CD4-positive, alpha-beta memory T cell (primary cell): ENCODE measurements at regions of chr3 and their contacts with region 1.

Region 1: GRCh38 chr3:141105828-141106628 is 54.9 kb downstream of the SPSB4 start:
- DNase-seq: peak; percentile 39 to 61 (median 47)
- H3K4me3 ChIP-seq: no peak overlapping the region
- H3K4me3 Mint-ChIP-seq: no peak overlapping the region
- H3K27ac ChIP-seq: no peak overlapping the region
- H3K27ac Mint-ChIP-seq: no peak overlapping the region
- H3K4me1 ChIP-seq: no peaks in the 10 kb centered on the region
- H3K4me1 Mint-ChIP-seq: no peaks in the 10 kb centered on the region
- H3K27me3 ChIP-seq: no peaks in the 10 kb centered on the region
- H3K27me3 Mint-ChIP-seq: peaks cover 2% of the 10 kb centered on the region in 2 donors

Region 2: DNA sequence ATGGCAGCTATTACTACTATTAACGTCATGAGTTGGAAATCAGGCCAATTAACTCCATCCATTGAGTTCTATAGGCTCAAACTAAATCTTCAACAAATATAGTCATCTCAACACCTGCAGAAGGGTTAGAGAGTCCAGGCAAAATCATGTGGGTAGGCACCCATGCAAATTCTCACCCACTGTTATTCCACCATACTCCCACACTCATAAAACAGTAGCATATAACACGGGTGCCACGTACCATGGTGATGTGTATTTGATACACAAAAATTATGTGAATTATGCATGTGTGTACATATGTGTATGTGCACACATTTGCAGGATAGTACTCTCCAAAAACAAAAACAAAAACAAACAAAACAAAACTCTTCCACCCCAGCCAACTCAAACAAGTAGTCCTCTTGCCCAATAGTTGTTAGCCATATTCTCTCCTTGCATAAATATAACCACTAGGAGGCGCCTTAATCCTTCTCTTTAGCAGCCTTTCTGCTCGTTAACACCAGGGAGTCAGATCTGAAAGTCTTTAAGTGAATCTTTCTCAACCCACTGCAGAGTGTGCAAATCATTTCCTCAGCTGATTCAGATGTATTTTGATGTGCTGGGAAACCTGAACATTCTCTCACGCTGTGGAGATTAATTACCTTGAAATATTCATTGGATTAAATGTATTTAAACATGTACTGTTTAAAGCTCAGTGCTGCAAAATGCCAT is 1678.6 kb before region 1 on chr3:
- CTCF ChIA-PET with region 1: no interaction called
- POLR2A ChIA-PET with region 1: no interaction called
- intact Hi-C with region 1: loop called (anchors 5 kb)
- DNase-seq: peak in 4 of 5 donors; percentile 35 to 38 (median 36)
- H3K4me3 ChIP-seq: no peak overlapping the region
- H3K4me3 Mint-ChIP-seq: no peak overlapping the region
- H3K27ac ChIP-seq: no peak overlapping the region
- H3K27ac Mint-ChIP-seq: no peak overlapping the region
- H3K4me1 ChIP-seq: no peaks in the 10 kb centered on the region
- H3K4me1 Mint-ChIP-seq: peaks cover 0 to 3% (median 0%) of the 10 kb centered on the region in 4 donors
- H3K27me3 ChIP-seq: no peaks in the 10 kb centered on the region
- H3K27me3 Mint-ChIP-seq: no peaks in the 10 kb centered on the region

Region 3: DNA sequence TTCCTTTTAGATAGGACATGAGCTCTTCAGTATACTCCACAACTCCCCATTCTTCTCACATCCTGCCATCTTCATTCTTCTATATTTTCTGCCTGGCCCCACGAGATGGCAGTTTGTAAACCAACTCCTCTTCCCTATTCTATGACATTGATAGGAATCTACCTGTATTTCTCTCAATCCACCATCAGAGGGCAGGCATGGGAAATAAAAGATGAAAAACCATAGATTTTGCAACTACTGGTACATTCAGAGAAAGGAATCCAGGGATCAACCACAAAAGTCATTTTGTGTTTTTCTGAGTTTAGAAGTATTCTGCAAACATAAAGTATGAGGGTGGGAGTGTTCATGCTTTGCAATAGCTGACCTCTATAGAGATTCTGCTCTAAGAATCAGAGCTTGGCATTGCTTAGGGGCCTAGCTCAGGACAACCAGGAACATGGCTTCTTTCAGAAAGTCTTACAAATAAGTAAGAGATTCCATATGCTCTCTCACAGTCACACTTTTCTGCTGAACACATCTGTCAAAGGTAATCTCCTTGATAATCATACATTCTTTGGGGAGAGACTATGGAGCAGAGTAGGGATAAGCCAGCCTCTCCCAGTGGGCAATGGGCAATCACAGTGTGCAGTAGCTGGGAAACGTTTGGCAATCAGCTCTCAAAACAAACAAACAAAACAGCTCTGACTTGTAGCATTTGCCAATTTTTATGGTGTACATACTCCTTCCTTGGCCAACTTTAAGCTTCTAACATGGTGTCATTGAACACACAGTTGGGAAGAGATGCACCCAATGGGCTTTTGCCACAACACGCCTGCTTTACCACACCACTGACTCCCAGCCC is 207.5 kb before region 1 on chr3:
- CTCF ChIA-PET with region 1: interaction called, 19 read pairs
- POLR2A ChIA-PET with region 1: no interaction called
- intact Hi-C with region 1: loop called (anchors 1 kb)
- DNase-seq: peak in 4 of 5 donors; percentile 28 to 43 (median 34)
- H3K4me3 ChIP-seq: no peak overlapping the region
- H3K4me3 Mint-ChIP-seq: no peak overlapping the region
- H3K27ac ChIP-seq: no peak overlapping the region
- H3K27ac Mint-ChIP-seq: no peak overlapping the region
- H3K4me1 ChIP-seq: no peaks in the 10 kb centered on the region
- H3K4me1 Mint-ChIP-seq: peaks cover 0 to 2% (median 0%) of the 10 kb centered on the region in 4 donors
- H3K27me3 ChIP-seq: no peaks in the 10 kb centered on the region
- H3K27me3 Mint-ChIP-seq: peaks cover 18 to 21% of the 10 kb centered on the region in 2 donors

Region 4: DNA sequence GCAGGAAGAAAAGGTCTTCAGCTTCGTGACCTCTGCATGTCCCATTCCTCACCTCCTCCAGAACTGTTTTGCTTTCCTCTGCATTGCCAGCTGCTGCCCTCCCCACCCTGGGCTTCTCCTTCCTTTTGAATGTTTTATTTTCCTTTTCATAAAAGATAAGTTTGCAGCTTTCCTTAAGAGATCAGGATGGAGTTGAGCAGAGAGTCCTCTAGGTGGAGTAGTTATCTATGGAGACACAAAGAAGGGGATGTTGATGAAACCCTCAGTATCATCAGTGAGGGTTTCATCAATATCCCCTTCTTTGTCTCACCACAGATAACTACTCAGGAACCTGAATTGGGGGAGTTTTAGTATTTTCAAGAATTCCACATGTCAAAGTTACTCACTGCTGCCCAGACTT is 183.4 kb before region 1 on chr3:
- CTCF ChIA-PET with region 1: interaction called, 4 read pairs
- POLR2A ChIA-PET with region 1: no interaction called
- intact Hi-C with region 1: loop called (anchors 1 kb)
- DNase-seq: no peak
- H3K4me3 ChIP-seq: no peak overlapping the region
- H3K4me3 Mint-ChIP-seq: no peak overlapping the region
- H3K27ac ChIP-seq: no peak overlapping the region
- H3K27ac Mint-ChIP-seq: no peak overlapping the region
- H3K4me1 ChIP-seq: no peaks in the 10 kb centered on the region
- H3K4me1 Mint-ChIP-seq: no peaks in the 10 kb centered on the region
- H3K27me3 ChIP-seq: peaks cover 1% of the 10 kb centered on the region
- H3K27me3 Mint-ChIP-seq: peaks cover 5 to 17% of the 10 kb centered on the region in 2 donors

Region 5: DNA sequence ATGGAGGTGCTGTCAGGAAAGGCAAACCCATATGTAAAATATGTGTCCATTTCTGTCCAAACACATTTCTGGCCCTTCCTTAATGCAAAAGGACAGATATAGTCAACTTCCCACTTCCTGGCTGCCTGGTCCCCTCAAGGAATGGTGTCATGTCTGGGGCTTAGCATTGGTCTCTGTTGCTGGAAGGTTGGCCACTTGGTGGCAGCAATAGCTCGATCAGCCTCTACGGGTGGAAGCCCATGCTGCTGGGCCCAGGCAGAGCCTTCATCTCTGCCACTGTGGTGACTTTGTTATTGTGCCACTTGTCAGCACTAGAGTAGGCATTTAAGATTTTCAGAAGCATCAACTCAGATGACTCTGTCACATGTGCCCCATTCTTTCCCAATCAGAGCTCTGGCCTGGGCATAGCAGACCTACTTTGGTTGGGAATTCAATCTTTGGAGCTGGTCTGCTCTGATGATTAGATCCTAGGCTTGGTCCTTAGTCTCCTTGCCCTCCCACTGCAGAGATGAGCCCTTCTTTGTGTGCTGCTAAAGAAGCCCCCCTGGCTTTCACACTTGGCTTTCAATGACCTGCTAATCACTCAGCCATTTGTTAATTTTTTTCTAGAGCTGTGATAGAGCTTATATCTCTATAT is 105.9 kb before region 1 on chr3:
- CTCF ChIA-PET with region 1: interaction called, 7 read pairs
- POLR2A ChIA-PET with region 1: no interaction called
- intact Hi-C with region 1: loop called (anchors 1 kb)
- DNase-seq: peak; percentile 24 to 50 (median 30)
- H3K4me3 ChIP-seq: no peak overlapping the region
- H3K4me3 Mint-ChIP-seq: no peak overlapping the region
- H3K27ac ChIP-seq: no peak overlapping the region
- H3K27ac Mint-ChIP-seq: no peak overlapping the region
- H3K4me1 ChIP-seq: no peaks in the 10 kb centered on the region
- H3K4me1 Mint-ChIP-seq: peaks cover 0 to 2% (median 0%) of the 10 kb centered on the region in 4 donors
- H3K27me3 ChIP-seq: no peaks in the 10 kb centered on the region
- H3K27me3 Mint-ChIP-seq: peaks cover 3 to 8% of the 10 kb centered on the region in 2 donors

Region 6: GRCh38 chr3:141011232-141011996 is 94.6 kb before region 1 on chr3:
- CTCF ChIA-PET with region 1: interaction called, 3 read pairs
- POLR2A ChIA-PET with region 1: no interaction called
- intact Hi-C with region 1: loop called (anchors 1 kb)
- DNase-seq: peak; percentile 51 to 62 (median 58)
- H3K4me3 ChIP-seq: no peak overlapping the region
- H3K4me3 Mint-ChIP-seq: no peak overlapping the region
- H3K27ac ChIP-seq: no peak overlapping the region
- H3K27ac Mint-ChIP-seq: peak overlapping the region in 1 of 7 donors; percentile 60
- H3K4me1 ChIP-seq: no peaks in the 10 kb centered on the region
- H3K4me1 Mint-ChIP-seq: peaks cover 1 to 4% (median 4%) of the 10 kb centered on the region in 4 donors
- H3K27me3 ChIP-seq: no peaks in the 10 kb centered on the region
- H3K27me3 Mint-ChIP-seq: peaks cover 9 to 19% of the 10 kb centered on the region in 2 donors

Region 7: GRCh38 chr3:141050576-141051442 is 55.2 kb before region 1 on chr3 and contains the start of gene SPSB4:
- CTCF ChIA-PET with region 1: no interaction called
- POLR2A ChIA-PET with region 1: no interaction called
- intact Hi-C with region 1: no loop called
- DNase-seq: no peak
- H3K4me3 ChIP-seq: no peak within 1 kb of the TSS
- H3K4me3 Mint-ChIP-seq: peak within 1 kb of the TSS in 7 of 8 donors; percentile 7 to 78 (median 53)
- H3K27ac ChIP-seq: no peak within 1 kb of the TSS
- H3K27ac Mint-ChIP-seq: no peak within 1 kb of the TSS
- H3K4me1 ChIP-seq: peaks cover 4% of the 10 kb centered on the region
- H3K4me1 Mint-ChIP-seq: peaks cover 7 to 23% (median 13%) of the 10 kb centered on the region in 4 donors
- H3K27me3 ChIP-seq: peaks cover 8% of the 10 kb centered on the region
- H3K27me3 Mint-ChIP-seq: peaks cover 41 to 58% of the 10 kb centered on the region in 2 donors
- total RNA-seq, gene SPSB4: not detected

Region 8: GRCh38 chr3:141201122-141201521 is 95.1 kb after region 1 on chr3:
- CTCF ChIA-PET with region 1: no interaction called
- POLR2A ChIA-PET with region 1: no interaction called
- intact Hi-C with region 1: no loop called
- DNase-seq: no peak
- H3K4me3 ChIP-seq: no peak overlapping the region
- H3K4me3 Mint-ChIP-seq: no peak overlapping the region
- H3K27ac ChIP-seq: no peak overlapping the region
- H3K27ac Mint-ChIP-seq: no peak overlapping the region
- H3K4me1 ChIP-seq: no peaks in the 10 kb centered on the region
- H3K4me1 Mint-ChIP-seq: no peaks in the 10 kb centered on the region
- H3K27me3 ChIP-seq: no peaks in the 10 kb centered on the region
- H3K27me3 Mint-ChIP-seq: peaks cover 2 to 10% of the 10 kb centered on the region in 2 donors